Ascending aorta (tissue), 2 donors: ENCODE measurements at regions of chr6 and their contacts with region 1.

Region 1: GRCh38 chr6:47631269-47631772 is 67.1 kb upstream of the ADGRF4 start:
- DNase-seq: no peak
- H3K4me3 ChIP-seq: no peak overlapping the region
- H3K27ac ChIP-seq: no peak overlapping the region
- H3K4me1 ChIP-seq: peaks cover 0 to 8% of the 10 kb centered on the region in 2 donors
- H3K27me3 ChIP-seq: no peaks in the 10 kb centered on the region
- CTCF ChIP-seq: peak; percentile 8 to 61 (median 39)

Region 2: DNA sequence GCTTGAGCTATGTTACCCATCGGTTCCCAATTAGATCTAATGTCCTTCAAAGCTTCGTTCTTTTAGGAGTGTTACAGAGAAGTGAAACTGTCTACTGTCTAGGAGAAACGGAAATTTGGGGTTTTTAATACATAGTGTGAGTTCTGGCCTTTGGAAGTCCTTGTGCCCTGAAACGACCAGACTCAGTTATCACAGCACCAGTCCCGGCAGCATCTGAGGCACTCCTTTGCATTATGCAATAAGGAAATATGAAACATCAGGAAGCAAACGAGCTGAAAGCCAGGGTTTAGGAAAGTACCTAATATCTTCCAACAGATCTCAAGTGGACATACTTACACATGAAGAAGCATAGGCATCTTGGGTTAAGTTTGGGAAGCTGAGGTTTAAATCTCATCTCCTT is 527.4 kb before region 1 on chr6:
- intact Hi-C with region 1: no loop called
- DNase-seq: no peak
- H3K4me3 ChIP-seq: no peak overlapping the region
- H3K27ac ChIP-seq: no peak overlapping the region
- H3K4me1 ChIP-seq: no peaks in the 10 kb centered on the region
- H3K27me3 ChIP-seq: no peaks in the 10 kb centered on the region
- CTCF ChIP-seq: no peak

Region 3: DNA sequence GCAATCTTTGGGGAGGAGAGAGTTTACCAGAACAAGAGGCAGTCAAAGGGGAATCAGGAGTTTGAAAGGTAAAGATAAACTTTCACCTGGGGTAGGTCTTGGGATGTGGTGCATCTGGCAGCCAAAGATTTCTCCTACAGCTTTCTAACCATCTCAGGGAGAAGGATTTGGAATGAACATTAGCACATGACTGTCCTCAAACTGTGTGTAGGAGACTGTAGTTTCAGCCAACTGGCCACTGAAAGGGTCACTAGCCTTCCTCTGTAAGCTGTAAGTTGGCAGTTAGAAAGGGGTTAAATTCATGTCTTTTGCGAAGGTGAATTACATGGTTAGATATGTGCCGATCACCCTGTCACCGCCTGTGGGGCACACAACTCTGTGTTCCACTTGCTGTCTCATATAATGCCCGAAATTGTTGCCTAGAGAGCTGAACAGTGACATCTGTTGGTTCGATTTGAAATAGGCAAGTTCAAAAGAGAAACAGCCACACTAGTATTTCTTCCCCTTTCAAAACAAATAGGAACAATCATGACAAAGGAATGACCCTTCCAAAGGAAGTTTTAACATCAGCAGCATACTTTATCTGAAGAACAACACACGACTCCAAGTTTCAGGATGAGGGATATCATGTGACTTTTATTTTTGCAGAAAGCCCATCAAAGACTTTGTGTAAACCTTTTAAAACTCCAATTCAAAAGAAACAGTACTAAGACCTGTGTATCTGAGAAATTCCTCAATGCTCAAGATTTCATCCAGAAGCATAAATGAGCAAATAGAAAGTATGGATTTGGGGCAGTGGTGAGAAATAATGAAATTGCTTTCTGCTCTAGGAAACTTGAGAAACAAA is 149.4 kb after region 1 on chr6:
- intact Hi-C with region 1: loop called (anchors 1 kb)
- DNase-seq: no peak
- H3K4me3 ChIP-seq: no peak overlapping the region
- H3K27ac ChIP-seq: no peak overlapping the region
- H3K4me1 ChIP-seq: no peaks in the 10 kb centered on the region
- H3K27me3 ChIP-seq: no peaks in the 10 kb centered on the region
- CTCF ChIP-seq: peak; percentile 12 to 60 (median 44)